ENCODE measurements at regions of chr4 and their contacts with region 1.

Region 1: DNA sequence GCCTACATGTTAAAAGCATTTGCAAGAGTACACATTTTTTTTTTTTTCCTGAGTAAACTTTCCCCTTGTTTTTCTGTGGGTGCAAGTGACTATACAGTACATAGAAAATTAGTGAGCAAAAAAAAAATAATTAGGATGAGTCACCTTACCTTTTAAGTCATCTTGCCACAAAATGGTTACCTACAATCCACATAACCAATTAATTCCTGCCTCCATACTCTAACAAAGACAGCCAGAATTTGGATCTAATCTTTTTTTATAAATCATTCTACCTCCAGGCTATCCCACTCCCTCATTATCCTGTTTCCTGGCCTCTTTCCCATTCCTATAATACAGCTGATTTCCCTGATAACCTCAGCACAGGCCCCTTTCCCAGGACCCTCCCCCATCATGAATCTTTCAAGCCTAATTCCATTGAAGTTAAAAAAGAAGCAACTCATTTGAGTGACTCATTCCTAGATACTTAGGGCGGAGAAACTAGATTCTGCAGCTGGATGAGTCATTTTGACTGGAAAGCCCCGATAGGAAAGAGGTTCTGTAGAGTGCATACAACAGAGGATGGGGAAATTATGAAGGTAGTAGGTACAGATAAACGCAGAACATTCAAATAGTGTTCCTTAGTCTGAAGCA is 128.2 kb downstream of the C4orf51 start:
- DNase-seq: no peak

Region 2: GRCh38 chr4:145732895-145733880 is 74.9 kb before region 1 on chr4:
- intact Hi-C with region 1: loop called in 1 of 2 experiments (anchors 10 kb)
- DNase-seq: peak; percentile 98

Measured in posterior vena cava (tissue), 2 donors.